Dorsolateral prefrontal cortex (tissue), 120 donors: ENCODE measurements at regions of chr11 and their contacts with region 1.

Region 1: GRCh38 chr11:36361901-36362391 is 65.9 kb downstream of the PRR5L start:
- DNase-seq: no peak
- H3K4me3 ChIP-seq: peak overlapping the region in 18 of 59 donors; percentile 5 to 36 (median 22)
- H3K27ac ChIP-seq: peak overlapping the region in 3 of 59 donors; percentile 12 to 38 (median 24)
- H3K27me3 ChIP-seq: no peaks in the 10 kb centered on the region
- CTCF ChIP-seq: no peak

Region 2: GRCh38 chr11:36478700-36479329 is 116.9 kb after region 1 on chr11:
- intact Hi-C with region 1: loop called in 1 of 2 experiments (anchors 5 kb)
- DNase-seq: peak in 3 of 10 donors; percentile 25 to 71 (median 61)
- H3K4me3 ChIP-seq: no peak overlapping the region
- H3K27ac ChIP-seq: peak overlapping the region in 21 of 59 donors; percentile 1 to 70 (median 27)
- H3K27me3 ChIP-seq: no peaks in the 10 kb centered on the region
- CTCF ChIP-seq: peak in 55 of 56 donors; percentile 53 to 90 (median 76)